ENCODE measurements at regions of chr11 and their contacts with region 1.

Region 1: GRCh38 chr11:95150946-95151684 is 61.5 kb downstream of the ENDOD1 start:
- DNase-seq: peak; percentile 87
- H3K4me3 Mint-ChIP-seq: peak overlapping the region; percentile 87
- H3K27ac Mint-ChIP-seq: peak overlapping the region; percentile 78
- H3K4me1 Mint-ChIP-seq: peaks cover 46% of the 10 kb centered on the region
- H3K27me3 Mint-ChIP-seq: peaks cover 6% of the 10 kb centered on the region

Region 2: DNA sequence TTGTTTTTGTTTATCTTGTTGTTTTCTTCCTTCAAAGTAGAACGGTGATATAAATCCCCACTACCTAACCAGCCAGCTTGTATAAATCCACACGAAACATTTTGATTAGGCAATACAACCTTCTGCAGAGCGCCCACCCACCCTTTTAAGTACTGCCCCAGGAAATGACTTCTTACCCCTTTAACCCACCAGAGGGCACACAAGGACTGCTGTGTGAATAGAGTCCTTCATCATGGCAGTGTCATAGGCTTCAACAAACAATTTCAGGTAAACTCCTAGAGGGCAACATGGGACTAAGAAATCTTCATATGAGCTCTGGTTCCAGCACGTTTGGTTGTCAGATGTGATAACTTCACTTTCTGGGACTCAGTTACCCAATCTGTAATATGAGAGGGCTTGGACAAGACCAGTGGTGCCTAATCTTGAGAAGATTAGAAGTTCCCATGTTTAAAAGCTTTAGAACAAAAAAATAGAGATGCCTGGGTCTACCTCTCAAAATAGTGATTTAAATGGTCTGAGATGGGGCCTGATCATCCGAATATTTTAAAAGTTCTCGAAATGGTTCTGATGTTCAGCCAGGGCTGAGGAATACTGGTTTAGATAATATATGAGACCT is 527.9 kb before region 1 on chr11:
- intact Hi-C with region 1: loop called (anchors 1 kb)
- DNase-seq: peak; percentile 27
- H3K4me3 Mint-ChIP-seq: no peak overlapping the region
- H3K27ac Mint-ChIP-seq: no peak overlapping the region
- H3K4me1 Mint-ChIP-seq: no peaks in the 10 kb centered on the region
- H3K27me3 Mint-ChIP-seq: peaks cover 7% of the 10 kb centered on the region

Region 3: GRCh38 chr11:95084509-95084908 is 66.6 kb before region 1 on chr11:
- intact Hi-C with region 1: loop called (anchors 1 kb)
- DNase-seq: peak; percentile 32
- H3K4me3 Mint-ChIP-seq: no peak overlapping the region
- H3K27ac Mint-ChIP-seq: peak overlapping the region; percentile 40
- H3K4me1 Mint-ChIP-seq: peaks cover 70% of the 10 kb centered on the region
- H3K27me3 Mint-ChIP-seq: no peaks in the 10 kb centered on the region

Region 4: DNA sequence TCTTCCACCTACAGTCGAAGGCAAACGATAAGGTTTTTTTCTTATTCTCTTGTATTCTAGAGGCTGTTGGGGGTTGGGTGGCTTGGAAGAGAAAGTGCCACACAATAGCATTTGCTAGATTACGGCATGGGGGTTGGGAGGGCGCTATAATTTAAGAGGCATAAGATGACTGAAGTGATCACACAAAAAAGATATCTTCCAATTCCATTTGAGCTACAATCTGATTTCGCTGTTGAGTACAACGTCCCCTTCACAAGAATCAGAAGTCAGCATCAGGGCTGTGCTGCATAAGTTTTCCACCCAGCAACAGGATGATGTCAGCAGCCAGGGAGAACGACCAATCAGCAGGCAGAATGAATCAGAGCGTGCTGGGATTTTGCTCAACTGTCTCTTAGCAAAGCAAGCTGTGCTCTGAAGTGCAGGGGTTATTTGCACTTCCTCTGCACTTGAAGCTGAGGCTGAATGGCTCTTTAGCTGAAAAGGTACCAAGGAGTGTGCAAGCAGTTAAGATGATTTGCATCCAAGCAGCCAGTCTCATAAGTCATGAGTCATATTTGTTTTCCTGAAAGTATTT is 103.1 kb after region 1 on chr11:
- intact Hi-C with region 1: loop called (anchors 1 kb)
- DNase-seq: peak; percentile 78
- H3K4me3 Mint-ChIP-seq: peak overlapping the region; percentile 81
- H3K27ac Mint-ChIP-seq: peak overlapping the region; percentile 80
- H3K4me1 Mint-ChIP-seq: peaks cover 43% of the 10 kb centered on the region
- H3K27me3 Mint-ChIP-seq: peaks cover 1% of the 10 kb centered on the region

Region 5: GRCh38 chr11:95705485-95706124 is 554.5 kb after region 1 on chr11:
- intact Hi-C with region 1: loop called (anchors 1 kb)
- DNase-seq: peak; percentile 77
- H3K4me3 Mint-ChIP-seq: no peak overlapping the region
- H3K27ac Mint-ChIP-seq: no peak overlapping the region
- H3K4me1 Mint-ChIP-seq: peaks cover 17% of the 10 kb centered on the region
- H3K27me3 Mint-ChIP-seq: peaks cover 3% of the 10 kb centered on the region

Region 6: GRCh38 chr11:95835768-95836488 is 684.8 kb after region 1 on chr11:
- intact Hi-C with region 1: loop called (anchors 1 kb)
- DNase-seq: peak; percentile 29
- H3K4me3 Mint-ChIP-seq: no peak overlapping the region
- H3K27ac Mint-ChIP-seq: peak overlapping the region; percentile 0
- H3K4me1 Mint-ChIP-seq: no peaks in the 10 kb centered on the region
- H3K27me3 Mint-ChIP-seq: no peaks in the 10 kb centered on the region

Measured in activated T-helper 1 cell treated with anti-CD3 and anti-CD28 coated beads, Interleukin-12 subunit alpha, Interleukin-12 subunit beta, Interleukin-2, Interleukin-4 antibody, amounts not matched to agents 30 ng/mL and 10 ng/mL and 1 ng/mL, durations not matched to agents 14 hours and 24 hours and 36 hours (primary cell).